Mammary epithelial cell (primary cell): ENCODE measurements at regions of chr3 and their contacts with region 1.

Region 1: DNA sequence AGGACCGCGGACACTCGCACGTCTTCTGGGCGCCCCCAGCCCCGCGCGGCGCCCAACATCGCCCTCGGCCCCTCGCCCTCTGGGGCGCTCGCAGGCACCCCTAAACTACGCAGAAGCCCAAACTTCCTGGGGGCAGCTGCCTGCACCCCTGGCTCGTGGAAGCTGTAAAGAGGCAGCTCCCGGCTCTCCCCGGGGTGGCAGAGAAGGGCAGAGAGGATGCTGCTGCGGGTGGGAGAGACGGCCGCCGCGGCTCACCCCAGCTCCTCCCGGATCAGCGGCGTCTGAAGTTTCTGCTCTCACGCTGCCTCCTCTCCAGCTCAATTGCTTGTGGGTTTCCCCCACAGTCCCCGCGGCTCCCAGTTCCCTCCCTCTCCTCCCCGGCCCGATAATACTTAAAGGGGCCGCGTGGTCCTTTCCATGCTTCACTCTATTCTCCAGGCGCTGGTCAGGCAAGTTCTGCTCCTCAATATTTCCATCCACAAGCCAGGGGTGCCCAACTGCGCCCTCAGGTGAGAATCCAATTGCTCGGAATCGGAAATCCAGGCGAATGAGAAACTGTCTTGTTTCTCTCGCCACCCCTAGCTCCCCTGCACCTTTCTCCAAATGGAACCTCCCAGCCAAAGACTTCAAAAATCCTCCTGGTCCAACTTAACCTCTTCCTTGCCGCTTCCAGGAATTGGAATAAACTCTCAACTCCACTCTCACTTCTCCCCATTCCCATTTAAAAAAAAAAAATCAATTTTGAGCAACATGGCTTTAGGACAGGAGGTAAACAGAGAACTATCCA is 748.5 kb downstream of the ROBO1 start:
- DNase-seq: peak; percentile 97
- H3K4me3 ChIP-seq: peak overlapping the region; percentile 85 to 93 (median 90)
- H3K27ac ChIP-seq: peak overlapping the region; percentile 88
- H3K4me1 ChIP-seq: peaks cover 18% of the 10 kb centered on the region
- H3K27me3 ChIP-seq: no peaks in the 10 kb centered on the region
- CTCF ChIP-seq: no peak

Region 2: DNA sequence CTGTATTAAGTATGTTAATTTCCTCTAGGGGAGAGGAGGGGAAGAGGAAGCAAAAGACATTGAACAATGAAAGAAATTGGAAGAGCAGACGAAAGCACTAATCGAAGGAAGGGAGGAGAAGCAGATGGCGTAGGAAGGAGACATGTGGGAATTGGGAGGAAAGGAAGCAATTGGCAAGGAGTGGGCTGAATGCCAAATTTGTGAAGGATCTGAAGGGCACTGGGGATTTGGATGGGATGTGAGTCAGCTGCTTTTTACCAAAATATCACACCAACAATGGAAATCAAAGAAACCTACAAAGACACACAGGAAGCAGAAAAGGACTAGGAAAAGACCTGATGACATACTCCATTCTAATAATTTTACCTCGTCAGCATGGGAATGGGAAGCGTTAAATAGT is 281.3 kb before region 1 on chr3:
- CTCF ChIA-PET with region 1: interaction called, 4 read pairs
- dilution Hi-C with region 1: no loop called
- in situ Hi-C with region 1: no loop called
- intact Hi-C with region 1: loop called (anchors 5 kb)
- DNase-seq: peak; percentile 46
- H3K4me3 ChIP-seq: no peak overlapping the region
- H3K27ac ChIP-seq: peak overlapping the region; percentile 6
- H3K4me1 ChIP-seq: peaks cover 19% of the 10 kb centered on the region
- H3K27me3 ChIP-seq: no peaks in the 10 kb centered on the region
- CTCF ChIP-seq: no peak

Region 3: DNA sequence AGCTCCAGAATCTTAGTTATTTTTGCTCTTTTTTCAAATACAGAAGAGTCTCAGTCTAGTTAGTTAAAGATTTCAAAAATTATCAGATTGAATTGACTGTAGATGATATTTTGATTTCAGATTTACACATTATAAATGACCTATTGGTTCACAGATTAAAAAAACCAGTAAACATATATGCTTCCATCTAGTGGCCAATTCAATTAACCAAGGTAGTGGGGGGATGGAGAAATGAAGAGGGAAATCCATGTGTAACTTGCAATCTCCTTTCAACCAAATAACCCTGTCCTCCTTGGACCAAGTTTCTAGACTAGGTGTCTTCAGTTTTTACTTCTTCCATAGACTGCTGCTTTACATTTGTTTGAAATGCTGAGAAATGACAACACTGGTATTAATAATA is 41.3 kb before region 1 on chr3:
- CTCF ChIA-PET with region 1: no interaction called
- dilution Hi-C with region 1: no loop called
- in situ Hi-C with region 1: no loop called
- intact Hi-C with region 1: loop called (anchors 2 kb)
- DNase-seq: peak; percentile 38
- H3K4me3 ChIP-seq: no peak overlapping the region
- H3K27ac ChIP-seq: no peak overlapping the region
- H3K4me1 ChIP-seq: peaks cover 3% of the 10 kb centered on the region
- H3K27me3 ChIP-seq: no peaks in the 10 kb centered on the region
- CTCF ChIP-seq: peak; percentile 48 to 65